CD8-positive, alpha-beta T cell (primary cell): ENCODE measurements at regions of chr11 and their contacts with region 1.

Region 1: GRCh38 chr11:129117595-129118350 is 74.4 kb downstream of the ARHGAP32 start:
- DNase-seq: peak in 8 of 9 experiments; percentile 13 to 72 (median 43)
- ATAC-seq: peak; percentile 40
- H3K4me3 ChIP-seq: no peak overlapping the region
- H3K4me3 Mint-ChIP-seq: no peak overlapping the region
- H3K27ac ChIP-seq: no peak overlapping the region
- H3K27ac Mint-ChIP-seq: no peak overlapping the region
- H3K4me1 ChIP-seq: no peaks in the 10 kb centered on the region
- H3K4me1 Mint-ChIP-seq: peaks cover 2% of the 10 kb centered on the region
- H3K27me3 ChIP-seq: no peaks in the 10 kb centered on the region
- H3K27me3 Mint-ChIP-seq: no peaks in the 10 kb centered on the region
- CTCF ChIP-seq: peak; percentile 95

Region 2: GRCh38 chr11:129331871-129332274 is 214.1 kb after region 1 on chr11:
- CTCF ChIA-PET with region 1: interaction called, 75 read pairs
- POLR2A ChIA-PET with region 1: no interaction called
- intact Hi-C with region 1: loop called (anchors 1 kb)
- DNase-seq: peak; percentile 26 to 81 (median 59)
- ATAC-seq: no peak
- H3K4me3 ChIP-seq: no peak overlapping the region
- H3K4me3 Mint-ChIP-seq: no peak overlapping the region
- H3K27ac ChIP-seq: no peak overlapping the region
- H3K27ac Mint-ChIP-seq: no peak overlapping the region
- H3K4me1 ChIP-seq: no peaks in the 10 kb centered on the region
- H3K4me1 Mint-ChIP-seq: no peaks in the 10 kb centered on the region
- H3K27me3 ChIP-seq: no peaks in the 10 kb centered on the region
- H3K27me3 Mint-ChIP-seq: peaks cover 2% of the 10 kb centered on the region
- CTCF ChIP-seq: peak; percentile 80

Region 3: DNA sequence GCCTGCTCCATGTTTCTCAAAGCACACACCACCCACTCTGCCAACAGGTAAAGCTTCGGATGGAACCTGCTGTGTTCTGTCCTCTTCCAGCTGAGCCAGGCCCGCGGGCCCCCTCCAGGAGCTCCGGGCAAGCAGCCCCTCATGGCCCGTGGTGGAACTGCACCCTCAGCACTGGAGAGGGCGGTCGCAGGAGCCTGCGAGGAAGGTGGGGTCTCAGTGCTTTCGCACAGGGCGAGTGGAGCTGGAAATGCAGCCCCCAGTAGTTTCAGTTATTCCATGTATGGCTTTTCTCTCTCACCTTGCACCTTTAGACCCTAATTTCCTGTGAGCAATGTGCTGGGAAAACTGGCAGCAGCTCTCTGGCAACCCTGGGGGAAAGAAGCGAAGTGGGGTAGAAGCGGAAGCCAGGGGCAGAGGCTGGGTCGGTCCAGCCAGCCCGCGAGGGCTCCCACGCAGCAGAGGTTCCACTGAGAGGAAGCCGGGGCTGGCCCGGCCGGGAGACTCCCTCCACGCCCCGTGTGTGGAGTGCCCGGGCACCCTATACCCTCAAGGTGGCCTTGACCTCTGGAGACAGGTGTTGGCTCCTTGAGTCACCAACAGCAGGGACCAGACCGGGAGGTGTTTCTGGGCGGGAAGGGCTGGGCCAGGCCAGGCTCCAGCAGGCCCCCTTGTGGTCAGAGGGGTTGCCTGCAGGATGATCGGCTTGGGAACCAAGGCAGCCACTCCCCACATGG is 578.0 kb after region 1 on chr11:
- CTCF ChIA-PET with region 1: no interaction called
- POLR2A ChIA-PET with region 1: no interaction called
- intact Hi-C with region 1: loop called in 1 of 2 experiments (anchors 5 kb)
- DNase-seq: peak; percentile 34 to 80 (median 70)
- ATAC-seq: peak; percentile 95
- H3K4me3 ChIP-seq: peak overlapping the region; percentile 62 to 76
- H3K4me3 Mint-ChIP-seq: peak overlapping the region; percentile 88
- H3K27ac ChIP-seq: peak overlapping the region in 1 of 2 experiments; percentile 1
- H3K27ac Mint-ChIP-seq: peak overlapping the region; percentile 77
- H3K4me1 ChIP-seq: peaks cover 5% of the 10 kb centered on the region
- H3K4me1 Mint-ChIP-seq: peaks cover 8% of the 10 kb centered on the region
- H3K27me3 ChIP-seq: no peaks in the 10 kb centered on the region
- H3K27me3 Mint-ChIP-seq: peaks cover 23% of the 10 kb centered on the region
- CTCF ChIP-seq: peak; percentile 38

Region 4: GRCh38 chr11:129750349-129751292 is 632.8 kb after region 1 on chr11:
- CTCF ChIA-PET with region 1: interaction called, 6 read pairs
- POLR2A ChIA-PET with region 1: no interaction called
- intact Hi-C with region 1: loop called in 1 of 2 experiments (anchors 1 kb)
- DNase-seq: peak; percentile 59 to 88 (median 77)
- ATAC-seq: peak; percentile 93
- H3K4me3 ChIP-seq: peak overlapping the region; percentile 19 to 36
- H3K4me3 Mint-ChIP-seq: peak overlapping the region; percentile 53
- H3K27ac ChIP-seq: no peak overlapping the region
- H3K27ac Mint-ChIP-seq: no peak overlapping the region
- H3K4me1 ChIP-seq: peaks cover 5% of the 10 kb centered on the region
- H3K4me1 Mint-ChIP-seq: peaks cover 4% of the 10 kb centered on the region
- H3K27me3 ChIP-seq: no peaks in the 10 kb centered on the region
- H3K27me3 Mint-ChIP-seq: peaks cover 7% of the 10 kb centered on the region
- CTCF ChIP-seq: peak; percentile 100